Posterior vena cava (tissue), 2 donors: ENCODE measurements at regions of chr2 and their contacts with region 1.

Region 1: DNA sequence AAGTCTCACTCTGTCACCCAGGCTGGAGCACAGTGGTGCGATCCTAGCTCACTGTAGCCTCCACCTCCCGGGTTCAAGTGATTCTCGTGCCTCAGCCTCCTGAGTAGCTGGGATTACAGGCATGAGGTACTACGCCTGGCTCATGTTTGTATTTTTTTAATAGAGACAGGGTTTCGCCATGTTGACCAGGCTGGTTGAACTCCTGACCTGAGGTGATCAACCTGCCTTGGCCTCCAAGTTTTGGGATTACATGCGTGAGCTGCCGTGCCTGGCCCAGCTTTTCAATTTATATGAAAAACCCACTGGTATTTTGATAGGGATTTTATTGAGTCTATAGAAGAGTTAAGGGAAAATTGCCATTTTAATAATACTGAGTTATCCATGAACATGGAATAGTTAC is 63.3 kb downstream of the XRCC5 start:
- DNase-seq: no peak

Region 2: GRCh38 chr2:216205486-216205885 is 33.0 kb after region 1 on chr2:
- intact Hi-C with region 1: loop called in 1 of 2 experiments (anchors 2 kb)
- DNase-seq: no peak